Panc1 (cell line): ENCODE measurements at regions of chr10 and their contacts with region 1.

Region 1: DNA sequence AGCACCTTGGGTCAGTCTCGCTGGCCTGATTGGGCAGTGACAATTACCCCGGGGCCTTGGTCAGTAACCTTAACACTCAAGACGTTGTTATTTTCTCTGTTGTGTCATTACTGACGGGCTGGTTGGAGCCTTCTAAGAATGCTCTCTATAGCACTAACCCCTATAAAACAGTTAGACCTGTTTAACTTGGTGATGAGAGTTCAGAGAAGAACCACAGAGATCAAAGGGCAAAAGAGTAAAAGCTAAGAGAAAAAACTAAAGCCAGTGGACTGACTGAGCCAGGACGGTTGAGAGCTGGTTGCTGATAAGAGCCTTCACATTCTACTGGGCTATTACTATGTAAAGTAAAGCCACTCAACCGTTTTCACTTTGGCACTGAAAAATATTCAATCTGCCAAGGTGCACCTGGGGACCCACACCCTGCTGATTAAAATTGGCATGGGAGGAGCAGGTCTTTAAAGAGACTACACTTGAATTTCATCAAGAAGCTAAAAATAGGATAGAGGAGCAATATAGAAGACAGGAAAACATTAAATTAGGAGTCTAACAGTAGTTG is 13.6 kb upstream of the ITGB1 start:
- DNase-seq: no peak
- ATAC-seq: peak; percentile 96
- H3K4me3 ChIP-seq: no peak overlapping the region; a peak in 1 of 4 replicates
- H3K27ac ChIP-seq: peak overlapping the region; percentile 100
- H3K4me1 ChIP-seq: peaks cover 34% of the 10 kb centered on the region
- H3K27me3 ChIP-seq: no peaks in the 10 kb centered on the region
- CTCF ChIP-seq: no peak

Region 2: GRCh38 chr10:32629910-32630309 is 341.7 kb before region 1 on chr10:
- CTCF ChIA-PET with region 1: no interaction called
- POLR2A ChIA-PET with region 1: interaction called, 15 read pairs
- in situ Hi-C with region 1: no loop called
- intact Hi-C with region 1: no loop called
- DNase-seq: no peak
- ATAC-seq: no peak
- H3K4me3 ChIP-seq: no peak overlapping the region
- H3K27ac ChIP-seq: no peak overlapping the region
- H3K4me1 ChIP-seq: no peaks in the 10 kb centered on the region
- H3K27me3 ChIP-seq: no peaks in the 10 kb centered on the region
- CTCF ChIP-seq: no peak

Region 3: GRCh38 chr10:32938554-32939061 is 33.0 kb before region 1 on chr10:
- CTCF ChIA-PET with region 1: no interaction called
- POLR2A ChIA-PET with region 1: no interaction called
- in situ Hi-C with region 1: no loop called
- intact Hi-C with region 1: no loop called
- DNase-seq: no peak
- ATAC-seq: peak; percentile 55
- H3K4me3 ChIP-seq: no peak overlapping the region
- H3K27ac ChIP-seq: peak overlapping the region; percentile 84
- H3K4me1 ChIP-seq: peaks cover 92% of the 10 kb centered on the region
- H3K27me3 ChIP-seq: no peaks in the 10 kb centered on the region
- CTCF ChIP-seq: no peak

Region 4: GRCh38 chr10:32987172-32987571 is 15.6 kb after region 1 on chr10:
- CTCF ChIA-PET with region 1: no interaction called
- POLR2A ChIA-PET with region 1: interaction called, 17 read pairs
- in situ Hi-C with region 1: no loop called
- intact Hi-C with region 1: no loop called
- DNase-seq: no peak
- ATAC-seq: no peak
- H3K4me3 ChIP-seq: no peak overlapping the region
- H3K27ac ChIP-seq: peak overlapping the region; percentile 100
- H3K4me1 ChIP-seq: peaks cover 43% of the 10 kb centered on the region
- H3K27me3 ChIP-seq: no peaks in the 10 kb centered on the region
- CTCF ChIP-seq: no peak